Aorta (tissue), 5 donors: ENCODE measurements at regions of chr1 and their contacts with region 1.

Region 1: DNA sequence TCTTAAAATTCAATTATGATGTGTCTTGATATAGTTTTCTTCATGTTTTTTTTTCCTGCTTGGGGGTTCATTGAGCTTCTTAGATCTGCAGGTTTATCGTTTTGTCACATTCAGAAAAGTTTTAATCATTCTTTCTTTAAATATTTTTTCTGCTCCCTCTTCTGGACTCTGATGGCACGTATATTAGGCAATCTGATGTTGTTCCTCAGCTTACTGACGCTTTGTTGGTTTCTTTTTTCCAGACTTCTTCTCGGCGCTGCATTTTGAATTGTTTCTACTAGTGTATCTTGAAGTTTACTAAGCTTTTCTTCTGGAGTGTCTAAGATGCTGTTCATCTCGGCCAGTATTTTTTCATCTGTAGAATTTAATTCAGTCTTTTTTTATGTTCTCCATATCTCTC is 44.8 kb upstream of the FMOD start:
- DNase-seq: no peak
- ATAC-seq: no peak
- H3K4me3 ChIP-seq: no peak overlapping the region
- H3K27ac ChIP-seq: no peak overlapping the region
- H3K4me1 ChIP-seq: no peaks in the 10 kb centered on the region
- H3K27me3 ChIP-seq: no peaks in the 10 kb centered on the region

Region 2: DNA sequence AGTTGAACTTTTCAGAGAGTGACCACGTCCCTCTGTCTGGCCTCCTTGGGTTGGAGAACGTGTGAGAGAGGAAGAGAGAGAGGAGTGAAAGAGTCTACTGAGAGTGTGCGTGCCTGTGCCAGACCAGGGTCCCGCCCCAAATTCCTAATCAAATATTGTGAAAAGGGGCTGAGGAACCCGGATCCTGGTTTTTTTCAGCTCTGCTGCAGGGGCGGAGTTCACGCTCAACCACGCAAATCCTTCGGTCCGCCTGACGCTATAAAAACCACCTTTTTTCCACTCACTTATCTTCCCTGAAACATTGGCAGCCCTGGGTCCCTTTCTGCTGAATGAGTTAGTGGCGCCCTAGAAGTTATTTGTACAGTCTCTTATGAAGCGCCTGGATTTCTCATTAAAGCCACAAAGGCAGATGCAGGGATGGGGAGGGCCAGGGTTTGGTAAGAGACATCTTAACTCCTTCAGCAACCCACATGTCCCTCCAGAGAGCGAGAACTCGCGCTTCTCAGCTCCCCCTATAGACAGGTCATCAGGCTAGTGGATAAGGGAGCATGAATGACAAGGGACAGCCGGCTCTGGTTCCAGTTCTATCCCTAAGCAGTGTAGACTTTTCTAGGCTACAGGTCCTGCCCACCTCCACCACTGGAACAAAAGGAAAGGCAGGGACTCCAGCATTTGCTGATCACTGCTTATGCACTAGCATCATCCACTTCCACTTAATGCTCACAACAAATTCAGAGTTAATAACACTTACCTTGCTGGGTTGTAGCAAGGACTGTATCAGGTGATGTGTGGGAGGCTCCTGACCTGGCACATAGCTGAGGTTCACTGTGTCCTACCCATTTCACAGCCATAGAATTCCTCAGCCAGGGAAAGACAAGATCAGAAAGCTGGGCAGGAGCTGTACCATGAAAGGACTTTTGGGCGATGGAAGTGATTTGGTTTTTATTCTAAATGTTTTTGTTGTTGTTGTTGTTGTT is 44.4 kb before region 1 on chr1 and contains the start of gene FMOD:
- intact Hi-C with region 1: loop called in 1 of 2 experiments (anchors 5 kb)
- DNase-seq: peak; percentile 82 to 85
- ATAC-seq: peak; percentile 83
- H3K4me3 ChIP-seq: peak within 1 kb of the TSS; percentile 28 to 50
- H3K27ac ChIP-seq: peak within 1 kb of the TSS; percentile 62 to 77
- H3K4me1 ChIP-seq: peaks cover 0 to 5% of the 10 kb centered on the region in 2 donors
- H3K27me3 ChIP-seq: no peaks in the 10 kb centered on the region
- total RNA-seq, gene FMOD: 204 to 353 TPM

Region 3: GRCh38 chr1:203463469-203464062 is 67.8 kb after region 1 on chr1:
- intact Hi-C with region 1: no loop called
- DNase-seq: no peak
- ATAC-seq: peak; percentile 37
- H3K4me3 ChIP-seq: no peak overlapping the region
- H3K27ac ChIP-seq: peak overlapping the region; percentile 96 to 99
- H3K4me1 ChIP-seq: peaks cover 6 to 9% of the 10 kb centered on the region in 2 donors
- H3K27me3 ChIP-seq: no peaks in the 10 kb centered on the region